Ovary (tissue), 10 donors: ENCODE measurements at regions of chr7 and their contacts with region 1.

Region 1: DNA sequence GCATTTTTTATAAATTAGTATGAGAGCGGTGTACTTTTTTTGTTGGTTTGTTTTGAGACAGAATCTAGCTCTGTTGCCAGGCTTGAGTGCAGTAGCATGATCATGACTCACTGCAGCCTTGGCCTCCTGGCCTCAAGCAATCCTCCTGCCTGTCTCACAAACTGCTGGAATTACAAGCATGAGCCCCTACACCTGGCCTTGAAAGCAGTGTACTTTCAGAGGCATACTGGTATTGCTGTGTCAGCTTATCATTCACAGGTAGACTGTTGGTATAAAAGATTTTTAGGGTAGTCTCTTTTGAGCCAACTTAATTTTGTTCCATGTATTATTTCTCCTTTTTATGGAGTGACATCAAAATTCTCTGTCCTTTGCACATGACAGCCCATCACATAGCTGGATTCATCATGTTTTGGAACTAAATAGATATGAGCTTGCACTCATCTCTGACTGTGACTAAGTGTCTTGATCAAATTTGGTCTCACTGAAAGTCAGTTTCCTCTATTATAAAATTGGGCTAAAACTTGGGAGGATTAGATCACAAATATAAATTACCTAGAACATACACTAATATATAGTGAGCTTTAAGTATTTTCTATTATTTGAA is 12.4 kb downstream of the GNAT3 start:
- DNase-seq: peak; percentile 53 to 74 (median 65)
- H3K4me3 ChIP-seq: no peak overlapping the region
- H3K27ac ChIP-seq: no peak overlapping the region
- H3K4me1 ChIP-seq: no peaks in the 10 kb centered on the region
- H3K27me3 ChIP-seq: no peaks in the 10 kb centered on the region
- CTCF ChIP-seq: no peak
- EP300 ChIP-seq: no peak
- POLR2A ChIP-seq: no peak

Region 2: GRCh38 chr7:80324032-80324431 is 175.4 kb before region 1 on chr7:
- intact Hi-C with region 1: no loop called
- DNase-seq: no peak
- H3K4me3 ChIP-seq: no peak overlapping the region
- H3K27ac ChIP-seq: no peak overlapping the region
- H3K4me1 ChIP-seq: no peaks in the 10 kb centered on the region
- H3K27me3 ChIP-seq: no peaks in the 10 kb centered on the region
- CTCF ChIP-seq: no peak
- EP300 ChIP-seq: no peak
- POLR2A ChIP-seq: no peak

Region 3: GRCh38 chr7:80467069-80467468 is 32.4 kb before region 1 on chr7:
- intact Hi-C with region 1: loop called in 1 of 4 experiments (anchors 2 kb)
- DNase-seq: no peak
- H3K4me3 ChIP-seq: no peak overlapping the region
- H3K27ac ChIP-seq: no peak overlapping the region
- H3K4me1 ChIP-seq: no peaks in the 10 kb centered on the region
- H3K27me3 ChIP-seq: no peaks in the 10 kb centered on the region
- CTCF ChIP-seq: no peak
- EP300 ChIP-seq: no peak
- POLR2A ChIP-seq: no peak

Region 4: GRCh38 chr7:80634505-80634904 is 135.1 kb after region 1 on chr7:
- intact Hi-C with region 1: no loop called
- DNase-seq: no peak
- H3K4me3 ChIP-seq: no peak overlapping the region
- H3K27ac ChIP-seq: no peak overlapping the region
- H3K4me1 ChIP-seq: no peaks in the 10 kb centered on the region
- H3K27me3 ChIP-seq: no peaks in the 10 kb centered on the region
- CTCF ChIP-seq: no peak
- EP300 ChIP-seq: no peak
- POLR2A ChIP-seq: no peak